ENCODE measurements at regions of chr19 and their contacts with region 1.

Region 1: GRCh38 chr19:2702162-2703076 is at the start of gene GNG7:
- DNase-seq: peak; percentile 86 to 100 (median 97)

Region 2: GRCh38 chr19:2648528-2648937 is 53.9 kb before region 1 on chr19:
- intact Hi-C with region 1: loop called (anchors 10 kb)
- DNase-seq: peak; percentile 77 to 95 (median 88)

Region 3: GRCh38 chr19:2663920-2664571 is 38.4 kb before region 1 on chr19:
- intact Hi-C with region 1: loop called (anchors 5 kb)
- DNase-seq: peak; percentile 54 to 93 (median 78)

Region 4: DNA sequence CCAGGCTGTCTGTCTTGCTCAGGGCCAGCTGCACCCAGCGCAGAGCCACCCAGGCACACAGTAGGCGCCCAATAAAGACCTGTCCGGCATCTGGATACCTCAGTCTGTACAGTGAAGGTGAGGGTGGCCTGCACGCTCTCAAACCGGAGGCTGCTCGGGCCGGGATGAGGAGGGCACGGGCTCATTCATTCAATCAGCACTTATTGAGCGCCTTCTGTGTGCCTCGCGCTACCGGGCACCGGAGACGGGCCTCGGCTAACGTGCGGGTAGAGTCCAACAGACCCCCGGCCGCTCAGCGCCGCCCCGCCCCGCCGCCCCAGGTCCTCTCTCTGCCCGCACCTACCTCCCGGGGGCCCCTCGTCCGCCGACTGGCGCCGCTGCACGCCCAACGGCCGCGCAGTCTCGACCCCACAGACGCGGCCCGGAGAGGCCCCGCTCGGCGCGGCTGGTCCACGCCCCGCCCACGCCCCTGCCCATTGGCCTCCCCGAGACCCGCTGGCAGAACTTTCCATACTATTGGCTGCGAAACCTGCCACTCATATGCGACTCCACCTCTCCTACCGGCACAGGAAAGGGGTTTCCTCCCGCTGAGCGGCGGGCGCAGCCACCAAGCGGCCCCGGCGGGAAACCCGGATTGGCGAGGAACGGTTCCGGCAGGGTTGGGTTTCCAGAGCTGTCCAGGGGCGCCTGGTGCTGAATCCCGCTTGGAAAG is 37.3 kb after region 1 on chr19 and contains the start of gene SLC39A3:
- intact Hi-C with region 1: loop called (anchors 5 kb)
- DNase-seq: peak; percentile 97 to 100 (median 99)

Region 5: GRCh38 chr19:2782936-2783780 is 80.7 kb after region 1 on chr19 and contains the start of gene SGTA:
- intact Hi-C with region 1: no loop called
- DNase-seq: peak; percentile 96 to 100 (median 98)

Measured in head of caudate nucleus (tissue), 42 donors.